CD4-positive, alpha-beta memory T cell (primary cell): ENCODE measurements at regions of chr1 and their contacts with region 1.

Region 1: DNA sequence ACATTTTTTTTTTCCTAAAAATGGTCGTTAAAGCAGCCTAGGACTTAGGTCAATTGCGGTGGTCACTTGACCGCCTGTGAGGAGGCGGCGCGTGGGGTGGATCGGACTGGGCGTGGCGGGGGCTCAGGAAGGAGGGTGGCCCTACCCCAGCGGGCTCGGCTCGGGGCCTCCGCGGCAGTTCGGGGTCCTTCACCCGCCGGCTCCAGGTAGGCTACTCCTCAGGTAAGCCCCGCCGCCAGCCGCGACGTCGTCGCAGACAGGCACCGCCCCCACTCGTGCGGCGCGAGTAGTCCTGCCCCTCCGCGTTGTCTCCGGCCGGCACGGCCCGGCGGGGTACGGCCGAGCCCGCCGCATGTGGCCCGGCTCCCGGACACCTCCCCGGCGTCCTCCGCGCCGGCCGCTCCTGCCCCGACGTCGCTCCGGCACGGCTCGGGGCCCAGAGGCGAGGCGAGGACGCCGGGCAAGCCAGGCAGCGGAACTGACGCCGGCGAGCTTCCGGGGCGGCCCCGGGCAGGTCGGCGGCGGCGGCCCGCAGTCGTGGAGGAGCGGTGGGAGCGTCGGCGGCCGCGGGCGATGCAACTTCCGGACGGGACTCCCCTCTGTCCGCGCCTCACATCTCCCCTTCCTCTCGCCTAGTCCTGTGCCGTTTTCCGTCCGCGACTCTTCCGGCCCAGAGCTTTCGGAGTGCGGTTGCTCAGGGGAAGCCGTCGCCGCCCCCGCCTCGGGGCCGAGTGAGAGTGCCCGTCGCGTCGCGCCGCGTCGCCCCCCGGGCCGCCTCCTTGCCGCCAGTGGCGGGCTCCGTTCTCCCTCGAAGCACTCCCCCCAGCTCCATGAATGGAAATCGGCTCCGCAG is at the start of gene AGO3:
- DNase-seq: peak; percentile 87 to 92 (median 89)
- H3K4me3 ChIP-seq: peak within 1 kb of the TSS; percentile 71 to 72
- H3K4me3 Mint-ChIP-seq: peak within 1 kb of the TSS; percentile 92 to 97 (median 94)
- H3K27ac ChIP-seq: peak within 1 kb of the TSS; percentile 92
- H3K27ac Mint-ChIP-seq: peak within 1 kb of the TSS; percentile 97 to 99 (median 98)
- H3K4me1 ChIP-seq: peaks cover 26% of the 10 kb centered on the region
- H3K4me1 Mint-ChIP-seq: peaks cover 22 to 37% (median 28%) of the 10 kb centered on the region in 4 donors
- H3K27me3 ChIP-seq: no peaks in the 10 kb centered on the region
- H3K27me3 Mint-ChIP-seq: no peaks in the 10 kb centered on the region
- total RNA-seq, gene AGO3: 45.6 to 47.3 TPM

Region 2: DNA sequence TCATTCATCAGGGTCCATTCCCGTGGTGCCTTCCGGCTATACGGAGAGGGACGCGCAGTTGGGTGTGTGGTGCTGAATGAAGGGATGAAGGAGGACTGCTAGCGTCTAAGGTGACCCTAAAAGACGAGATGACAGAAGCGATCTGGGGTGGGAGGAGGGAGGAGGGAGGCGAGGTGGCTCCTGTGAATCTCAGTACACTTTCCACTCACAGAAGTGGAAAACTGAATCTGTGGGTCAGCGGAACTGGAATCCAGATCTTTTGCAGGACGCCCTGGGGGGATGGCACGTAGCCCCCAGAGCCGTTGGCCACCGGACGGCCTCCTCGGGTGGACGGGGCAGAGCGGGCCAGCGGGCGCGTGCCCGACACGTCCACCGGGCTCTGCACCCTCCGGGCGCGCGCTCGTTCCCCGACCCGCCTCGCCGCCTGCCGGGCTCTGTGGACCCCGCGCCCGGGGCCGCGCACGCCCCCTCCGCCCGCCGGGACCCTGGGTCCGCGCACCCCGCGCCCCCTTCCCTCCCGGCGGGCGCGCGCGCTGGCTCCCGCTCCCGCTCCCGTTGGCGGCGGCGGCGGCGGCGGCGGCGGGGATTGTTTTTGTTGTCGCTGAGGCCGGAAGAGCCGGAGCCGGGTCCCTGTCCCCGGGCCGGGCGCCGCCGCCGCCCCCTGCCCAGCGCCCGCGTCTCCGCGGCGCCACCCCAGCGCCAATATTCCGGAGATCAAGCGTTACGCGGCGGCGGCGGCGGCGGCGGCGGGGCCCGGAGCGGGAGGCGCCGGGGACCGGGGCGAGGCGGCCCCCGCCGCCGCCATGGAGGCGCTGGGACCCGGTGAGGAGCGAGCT is 123.0 kb before region 1 on chr1 and contains the start of gene AGO4:
- CTCF ChIA-PET with region 1: no interaction called
- POLR2A ChIA-PET with region 1: no interaction called
- intact Hi-C with region 1: loop called (anchors 5 kb)
- DNase-seq: peak in 4 of 5 donors; percentile 21 to 36 (median 30)
- H3K4me3 ChIP-seq: peak within 1 kb of the TSS; percentile 26 to 77
- H3K4me3 Mint-ChIP-seq: peak within 1 kb of the TSS; percentile 90 to 96 (median 94)
- H3K27ac ChIP-seq: peak within 1 kb of the TSS; percentile 71
- H3K27ac Mint-ChIP-seq: peak within 1 kb of the TSS; percentile 90 to 97 (median 93)
- H3K4me1 ChIP-seq: peaks cover 45% of the 10 kb centered on the region
- H3K4me1 Mint-ChIP-seq: peaks cover 30 to 58% (median 40%) of the 10 kb centered on the region in 4 donors
- H3K27me3 ChIP-seq: no peaks in the 10 kb centered on the region
- H3K27me3 Mint-ChIP-seq: no peaks in the 10 kb centered on the region
- total RNA-seq, gene AGO4: 30.1 to 32.9 TPM

Region 3: DNA sequence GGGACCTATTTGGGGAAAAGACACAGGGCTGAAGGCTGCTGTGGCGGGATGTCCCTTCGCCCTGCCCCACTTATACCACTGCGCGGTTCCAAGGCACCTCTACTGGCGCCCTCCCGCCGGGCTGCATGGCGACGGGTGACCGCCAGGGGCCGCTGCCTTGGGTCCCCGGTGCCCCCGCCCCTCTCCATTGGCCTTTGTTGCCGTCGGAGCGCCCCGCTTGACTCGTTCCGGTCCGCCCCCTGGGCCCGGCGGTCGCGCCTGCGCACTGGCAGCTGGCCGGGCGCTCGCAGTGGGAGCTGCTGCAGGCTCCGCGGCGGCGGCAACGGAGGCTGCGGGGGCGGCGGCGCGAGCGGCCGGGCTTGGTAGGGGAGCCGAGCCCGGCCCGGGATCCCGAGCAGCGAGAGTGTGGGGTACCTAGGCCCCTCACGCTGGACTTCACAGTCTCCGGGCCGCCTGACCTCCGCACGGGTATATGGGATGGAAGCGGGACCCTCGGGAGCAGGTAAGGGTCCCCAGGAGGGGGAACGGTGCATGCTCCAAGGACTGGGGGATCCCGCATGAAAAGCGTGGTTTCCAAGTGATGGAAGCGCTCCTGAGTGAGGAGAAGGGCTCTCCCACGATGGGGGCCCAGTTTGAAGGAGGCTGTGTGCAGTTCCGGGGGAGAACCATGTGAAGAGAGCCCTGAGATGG is 47.7 kb before region 1 on chr1 and contains the start of gene AGO1:
- CTCF ChIA-PET with region 1: interaction called, 5 read pairs
- POLR2A ChIA-PET with region 1: interaction called, 11 read pairs
- intact Hi-C with region 1: loop called (anchors 1 kb)
- DNase-seq: peak; percentile 94 to 97 (median 97)
- H3K4me3 ChIP-seq: peak within 1 kb of the TSS; percentile 73 to 89
- H3K4me3 Mint-ChIP-seq: peak within 1 kb of the TSS; percentile 92 to 97 (median 94)
- H3K27ac ChIP-seq: peak within 1 kb of the TSS; percentile 77
- H3K27ac Mint-ChIP-seq: peak within 1 kb of the TSS; percentile 57 to 94 (median 87)
- H3K4me1 ChIP-seq: peaks cover 40% of the 10 kb centered on the region
- H3K4me1 Mint-ChIP-seq: peaks cover 37 to 58% (median 46%) of the 10 kb centered on the region in 4 donors
- H3K27me3 ChIP-seq: no peaks in the 10 kb centered on the region
- H3K27me3 Mint-ChIP-seq: peaks cover 1 to 3% of the 10 kb centered on the region in 2 donors
- total RNA-seq, gene AGO1: 26.5 to 27.3 TPM

Region 4: DNA sequence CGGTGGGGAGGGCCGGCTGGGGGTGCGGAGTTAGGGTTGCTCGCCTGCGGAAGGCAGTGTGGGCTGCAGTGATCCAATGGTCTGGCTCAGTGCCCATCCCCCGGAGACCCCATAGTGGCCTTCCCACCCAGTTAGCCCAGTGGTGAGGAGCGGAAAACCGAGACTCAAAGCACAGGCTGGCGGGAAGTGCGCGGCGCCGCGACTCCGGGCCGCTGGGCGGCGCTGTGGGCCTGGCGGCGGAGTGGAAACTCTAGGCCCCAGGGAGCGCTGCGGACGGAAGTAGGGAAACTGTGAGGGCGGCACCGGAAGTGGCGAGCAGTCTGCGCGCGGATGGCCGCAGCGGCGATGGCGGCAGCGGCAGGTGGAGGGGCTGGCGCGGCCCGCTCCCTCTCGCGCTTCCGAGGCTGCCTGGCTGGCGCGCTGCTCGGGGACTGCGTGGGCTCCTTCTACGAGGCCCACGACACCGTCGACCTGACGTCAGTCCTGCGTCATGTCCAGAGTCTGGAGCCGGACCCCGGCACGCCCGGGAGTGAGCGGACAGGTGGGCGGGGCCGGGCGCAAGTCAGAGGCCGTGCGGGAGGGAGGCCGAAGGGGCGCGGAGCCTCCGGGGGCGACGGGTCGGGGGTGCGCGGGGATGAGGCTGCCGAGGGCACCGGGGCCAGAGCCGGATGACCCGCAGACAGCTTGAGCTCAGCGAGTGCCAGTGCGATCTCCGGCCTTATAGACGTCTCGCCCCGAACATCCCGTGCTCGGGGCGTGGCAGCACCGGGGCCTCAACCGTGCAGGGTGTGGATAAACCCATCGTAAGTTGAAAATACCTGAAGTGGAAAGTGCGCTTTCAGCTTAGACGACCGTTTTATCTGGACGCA is 158.0 kb after region 1 on chr1 and contains the start of gene ADPRS:
- CTCF ChIA-PET with region 1: no interaction called
- POLR2A ChIA-PET with region 1: interaction called, 10 read pairs
- intact Hi-C with region 1: loop called (anchors 2 kb)
- DNase-seq: peak; percentile 88 to 91 (median 89)
- H3K4me3 ChIP-seq: peak within 1 kb of the TSS; percentile 29 to 87
- H3K4me3 Mint-ChIP-seq: peak within 1 kb of the TSS; percentile 87 to 98 (median 92)
- H3K27ac ChIP-seq: peak within 1 kb of the TSS; percentile 92
- H3K27ac Mint-ChIP-seq: peak within 1 kb of the TSS; percentile 88 to 99 (median 96)
- H3K4me1 ChIP-seq: peaks cover 18% of the 10 kb centered on the region
- H3K4me1 Mint-ChIP-seq: peaks cover 11 to 38% (median 15%) of the 10 kb centered on the region in 4 donors
- H3K27me3 ChIP-seq: no peaks in the 10 kb centered on the region
- H3K27me3 Mint-ChIP-seq: peaks cover 6 to 14% of the 10 kb centered on the region in 2 donors
- total RNA-seq, gene ADPRS: 26.7 to 28.6 TPM

Region 5: DNA sequence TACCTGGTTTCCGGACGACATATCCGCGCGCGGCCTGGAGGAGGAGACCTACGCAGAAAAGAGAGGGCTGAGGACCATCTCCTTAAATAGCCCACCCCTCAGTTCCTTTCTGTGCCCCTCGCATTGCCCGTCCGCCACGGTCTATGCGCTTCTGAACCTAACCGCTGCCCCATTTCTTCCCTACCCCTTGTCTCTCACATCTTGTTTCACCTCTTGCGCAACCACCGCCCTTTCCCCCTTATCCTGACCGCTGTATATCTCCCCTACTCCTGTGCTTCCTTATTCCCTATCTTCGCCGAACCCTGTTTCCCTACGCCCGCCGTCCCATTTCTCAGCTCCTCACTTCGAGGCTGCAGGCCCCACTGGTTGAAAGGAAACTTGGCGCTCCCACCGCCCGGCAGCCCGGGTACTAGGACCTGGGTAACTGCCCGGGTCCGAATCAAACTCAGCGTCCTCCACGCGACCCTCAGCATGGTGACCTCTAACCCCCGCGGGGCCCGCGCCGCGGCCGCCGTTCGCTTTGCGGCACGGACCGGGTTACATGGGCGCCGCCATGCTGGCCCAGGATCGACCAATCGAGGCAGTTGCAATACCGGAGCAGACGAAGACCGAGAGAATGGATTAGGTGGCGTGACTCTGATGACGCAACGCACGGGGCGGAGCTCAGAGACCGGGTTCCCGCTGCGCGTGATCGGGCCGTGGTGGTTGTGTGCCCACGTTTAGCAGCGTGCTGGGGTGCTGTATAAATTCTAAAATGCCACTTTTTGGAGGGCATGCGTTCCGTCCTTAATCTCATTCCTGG is 533.2 kb after region 1 on chr1 and contains the start of gene MRPS15:
- CTCF ChIA-PET with region 1: no interaction called
- POLR2A ChIA-PET with region 1: interaction called, 6 read pairs
- intact Hi-C with region 1: loop called (anchors 2 kb)
- DNase-seq: peak; percentile 91 to 95 (median 92)
- H3K4me3 ChIP-seq: peak within 1 kb of the TSS; percentile 83 to 87
- H3K4me3 Mint-ChIP-seq: peak within 1 kb of the TSS; percentile 96 to 99 (median 98)
- H3K27ac ChIP-seq: peak within 1 kb of the TSS; percentile 80
- H3K27ac Mint-ChIP-seq: peak within 1 kb of the TSS; percentile 95 to 98 (median 97)
- H3K4me1 ChIP-seq: peaks cover 23% of the 10 kb centered on the region
- H3K4me1 Mint-ChIP-seq: peaks cover 19 to 50% (median 31%) of the 10 kb centered on the region in 4 donors
- H3K27me3 ChIP-seq: no peaks in the 10 kb centered on the region
- H3K27me3 Mint-ChIP-seq: no peaks in the 10 kb centered on the region
- total RNA-seq, gene MRPS15: 32.5 to 33.9 TPM